ENCODE measurements at regions of chr1 and their contacts with region 1.

Region 1: GRCh38 chr1:212600980-212601379 is 7.6 kb upstream of the ATF3 start:
- DNase-seq: no peak
- ATAC-seq: no peak
- H3K4me3 ChIP-seq: no peak overlapping the region
- H3K27ac ChIP-seq: no peak overlapping the region
- H3K4me1 ChIP-seq: peaks cover 0 to 20% (median 9%) of the 10 kb centered on the region in 9 donors
- H3K27me3 ChIP-seq: peaks cover 0 to 65% (median 2%) of the 10 kb centered on the region in 7 donors
- CTCF ChIP-seq: no peak

Region 2: DNA sequence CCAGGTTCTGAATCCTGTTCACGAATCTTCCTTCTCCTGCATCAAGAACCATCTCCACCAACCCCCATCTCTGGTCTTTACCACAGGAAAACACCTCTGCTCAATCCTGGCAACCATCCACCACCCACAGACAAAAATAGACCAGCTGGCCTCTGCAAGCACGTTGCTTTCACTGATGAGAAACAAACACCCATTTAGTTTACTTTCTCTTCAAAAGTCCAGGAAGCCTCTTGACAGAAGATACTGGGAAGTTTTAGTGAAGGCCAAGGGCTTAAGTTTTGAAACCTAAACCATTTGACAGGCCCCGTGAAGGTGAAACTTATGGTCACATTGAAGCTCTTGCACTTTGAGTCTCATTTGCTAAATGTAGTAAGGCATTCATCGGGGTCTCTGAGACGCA is 438.3 kb before region 1 on chr1:
- intact Hi-C with region 1: no loop called
- DNase-seq: peak; percentile 31 to 76
- ATAC-seq: peak; percentile 32 to 69 (median 57)
- H3K4me3 ChIP-seq: no peak overlapping the region
- H3K27ac ChIP-seq: peak overlapping the region in 9 of 10 donors; percentile 3 to 81 (median 42)
- H3K4me1 ChIP-seq: peaks cover 5 to 52% (median 39%) of the 10 kb centered on the region in 9 donors
- H3K27me3 ChIP-seq: no peaks in the 10 kb centered on the region
- CTCF ChIP-seq: no peak

Region 3: DNA sequence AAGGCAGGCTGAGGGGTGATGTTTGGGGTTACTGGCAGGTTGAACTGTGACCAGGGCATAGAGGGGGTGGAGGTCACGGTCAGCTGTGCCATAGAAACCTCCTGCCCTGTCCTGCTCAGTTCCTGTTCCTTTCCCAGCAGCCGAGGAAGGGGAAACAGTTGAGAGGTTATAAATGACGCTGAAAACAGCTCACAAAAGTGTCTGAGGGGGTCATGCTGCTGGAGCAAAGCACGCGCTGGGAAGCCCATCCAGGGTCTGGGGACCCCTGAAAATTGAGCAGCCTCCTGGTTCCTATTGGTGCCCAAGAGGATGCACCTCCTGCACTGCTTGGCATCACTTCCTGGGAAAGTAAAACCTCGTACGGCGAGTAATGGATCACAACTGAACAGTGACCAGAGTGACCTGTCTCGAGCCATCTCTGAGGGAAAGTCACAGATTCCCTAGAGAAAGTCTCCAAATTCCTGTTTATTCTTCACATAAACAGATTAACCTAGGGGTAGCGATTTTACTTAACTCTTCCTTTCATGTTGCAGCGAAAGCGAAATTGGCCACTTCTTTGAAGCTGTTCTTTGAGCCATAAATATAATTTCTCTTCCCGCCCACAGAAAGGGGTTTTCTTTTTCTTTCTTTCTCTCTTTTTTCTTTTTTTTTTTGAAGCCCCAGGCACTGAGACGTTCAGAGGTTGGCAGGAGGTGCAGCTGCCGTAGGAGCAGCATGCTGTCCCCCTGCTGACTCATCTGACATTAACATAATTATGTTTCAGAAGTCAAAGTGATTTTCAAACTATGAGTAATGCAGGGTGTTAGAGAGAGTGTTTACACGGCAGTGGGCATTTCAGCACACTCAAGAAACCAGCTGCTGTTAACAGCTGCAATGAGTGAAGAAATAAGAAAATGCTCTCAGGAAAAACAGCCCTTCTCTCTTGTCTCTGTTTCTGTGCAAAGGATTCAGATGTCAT is 34.2 kb before region 1 on chr1:
- intact Hi-C with region 1: loop called in 4 of 10 experiments (anchors 2 to 5 kb)
- DNase-seq: peak in 1 of 2 donors; percentile 39
- ATAC-seq: peak; percentile 72 to 93 (median 86)
- H3K4me3 ChIP-seq: peak overlapping the region; percentile 5 to 64 (median 53)
- H3K27ac ChIP-seq: peak overlapping the region; percentile 5 to 89 (median 80)
- H3K4me1 ChIP-seq: peaks cover 0 to 19% (median 13%) of the 10 kb centered on the region in 9 donors
- H3K27me3 ChIP-seq: no peaks in the 10 kb centered on the region
- CTCF ChIP-seq: peak in 3 of 9 donors; percentile 6 to 10 (median 8)

Measured in heart right ventricle (tissue), 16 donors.